ENCODE measurements at regions of chr10 and their contacts with region 1.

Region 1: DNA sequence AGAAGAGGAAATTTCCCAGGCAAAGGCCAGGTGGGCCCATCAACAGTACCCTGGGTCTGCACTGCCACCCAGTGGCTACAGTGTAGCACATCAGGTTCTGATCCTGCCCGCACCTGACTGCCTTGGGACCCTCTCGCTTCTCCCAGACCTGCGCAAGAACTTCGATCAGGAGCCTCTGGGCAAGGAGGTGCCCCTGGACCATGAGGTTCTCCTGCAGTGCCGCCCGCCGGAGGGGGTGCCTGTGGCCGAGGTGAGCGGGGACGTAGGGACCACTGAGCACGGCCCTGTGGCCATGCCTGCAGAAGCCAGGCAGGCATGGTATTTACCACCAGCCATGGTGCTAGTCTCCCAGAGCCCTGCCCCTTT is 33.9 kb upstream of the SLC29A3 start:
- DNase-seq: peak; percentile 74 to 80
- H3K4me3 ChIP-seq: no peak overlapping the region
- H3K4me3 Mint-ChIP-seq: no peak overlapping the region
- H3K27ac Mint-ChIP-seq: no peak overlapping the region
- H3K4me1 ChIP-seq: peaks cover 12% of the 10 kb centered on the region
- H3K4me1 Mint-ChIP-seq: peaks cover 3% of the 10 kb centered on the region
- H3K27me3 ChIP-seq: no peaks in the 10 kb centered on the region
- H3K27me3 Mint-ChIP-seq: no peaks in the 10 kb centered on the region
- CTCF ChIP-seq: peak; percentile 97

Region 2: GRCh38 chr10:70903262-70903921 is 381.8 kb before region 1 on chr10:
- CTCF ChIA-PET with region 1: interaction called, 9 read pairs
- POLR2A ChIA-PET with region 1: no interaction called
- intact Hi-C with region 1: loop called (anchors 1 kb)
- DNase-seq: peak; percentile 71 to 79
- H3K4me3 ChIP-seq: no peak overlapping the region
- H3K4me3 Mint-ChIP-seq: no peak overlapping the region
- H3K27ac Mint-ChIP-seq: no peak overlapping the region
- H3K4me1 ChIP-seq: peaks cover 8% of the 10 kb centered on the region
- H3K4me1 Mint-ChIP-seq: no peaks in the 10 kb centered on the region
- H3K27me3 ChIP-seq: no peaks in the 10 kb centered on the region; the same call in 1 of the 2 replicates
- H3K27me3 Mint-ChIP-seq: peaks cover 3% of the 10 kb centered on the region
- CTCF ChIP-seq: peak; percentile 97 to 98